GM12878 (cell line): ENCODE measurements at regions of chr12 and their contacts with region 1.

Region 1: DNA sequence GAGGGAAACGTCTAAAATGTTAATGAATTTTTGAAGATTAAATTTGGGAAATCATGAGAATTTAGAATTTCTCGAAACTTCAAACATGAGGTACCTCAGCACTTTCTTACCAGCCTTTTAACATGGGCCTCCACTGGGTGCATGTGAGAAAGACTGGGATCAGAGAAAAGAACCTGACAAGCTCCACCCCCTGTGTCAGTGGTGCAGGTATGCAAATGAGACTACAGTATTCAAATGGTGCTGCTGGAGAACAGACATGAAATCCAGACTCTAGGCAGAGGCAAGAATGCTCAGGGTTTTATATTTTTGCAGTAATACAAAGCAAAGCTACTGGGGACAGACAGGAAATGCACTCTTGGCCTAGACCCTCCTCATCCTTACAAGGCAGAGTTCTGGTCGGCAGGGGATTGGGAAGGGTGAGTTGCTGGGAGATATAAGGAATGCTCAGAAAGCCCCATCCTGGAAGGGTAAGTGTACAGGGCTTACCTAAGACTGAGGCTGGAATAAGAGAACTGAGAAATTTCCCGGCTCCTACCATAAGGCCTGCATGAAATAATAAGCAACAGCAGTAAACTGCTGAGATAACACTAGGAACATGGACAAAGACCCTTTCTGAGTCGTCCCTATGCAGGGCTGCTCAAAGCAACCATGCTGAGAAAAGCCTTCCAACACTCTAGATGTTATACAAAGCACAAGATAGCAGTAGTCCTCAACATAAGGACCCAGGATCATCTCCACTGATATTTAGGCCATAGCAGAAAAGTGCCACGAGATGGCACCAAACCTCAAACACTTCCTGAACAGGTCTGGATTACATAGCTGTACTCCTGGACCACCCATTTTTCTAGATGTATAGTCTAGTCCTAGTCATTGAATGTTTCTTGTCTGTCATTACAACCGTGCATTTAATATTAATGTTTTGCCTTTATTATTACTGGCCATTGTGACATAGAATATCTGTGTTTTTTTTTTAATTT is 260.8 kb downstream of the RASSF9 start:
- DNase-seq: peak; percentile 13
- ATAC-seq: peak; percentile 100
- H3K4me3 ChIP-seq: no peak overlapping the region
- H3K27ac ChIP-seq: no peak overlapping the region
- H3K4me1 ChIP-seq: no peaks in the 10 kb centered on the region
- H3K27me3 ChIP-seq: no peaks in the 10 kb centered on the region
- CTCF ChIP-seq: peak; percentile 68 to 74 (median 68)
- EP300 ChIP-seq: no peak
- POLR2A ChIP-seq: no peak
- RAD21 ChIP-seq: peak; percentile 76

Region 2: GRCh38 chr12:85301051-85301450 is 274.4 kb before region 1 on chr12:
- CTCF ChIA-PET with region 1: no interaction called
- POLR2A ChIA-PET with region 1: no interaction called
- RAD21 ChIA-PET with region 1: no interaction called
- SMC1A ChIA-PET with region 1: no interaction called
- in situ Hi-C with region 1: no loop called
- intact Hi-C with region 1: no loop called
- DNase-seq: no peak
- ATAC-seq: peak; percentile 49
- H3K4me3 ChIP-seq: no peak overlapping the region
- H3K27ac ChIP-seq: no peak overlapping the region
- H3K4me1 ChIP-seq: no peaks in the 10 kb centered on the region
- H3K27me3 ChIP-seq: no peaks in the 10 kb centered on the region
- CTCF ChIP-seq: no peak
- EP300 ChIP-seq: no peak
- POLR2A ChIP-seq: no peak
- RAD21 ChIP-seq: no peak

Region 3: DNA sequence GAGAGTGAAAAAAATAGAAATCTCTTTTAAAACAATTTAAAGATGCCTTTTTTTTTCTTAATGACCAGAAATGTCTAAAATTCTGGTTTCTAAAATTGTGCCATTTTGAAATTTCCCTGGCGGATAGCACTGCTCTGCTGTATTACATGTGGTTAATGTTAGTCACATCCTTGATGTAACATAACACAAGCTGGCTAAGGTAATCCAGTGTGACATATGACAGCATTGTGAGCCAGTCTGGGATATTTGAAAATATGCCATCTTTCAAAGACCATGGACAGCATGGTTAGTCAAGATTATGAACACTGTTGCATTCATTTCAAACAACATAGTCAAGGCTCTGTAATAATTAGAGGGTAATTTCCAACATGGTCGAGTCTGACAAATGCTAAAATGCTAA is 162.1 kb before region 1 on chr12:
- CTCF ChIA-PET with region 1: no interaction called
- POLR2A ChIA-PET with region 1: no interaction called
- RAD21 ChIA-PET with region 1: no interaction called
- SMC1A ChIA-PET with region 1: no interaction called
- in situ Hi-C with region 1: no loop called
- intact Hi-C with region 1: no loop called
- DNase-seq: no peak
- ATAC-seq: no peak
- H3K4me3 ChIP-seq: no peak overlapping the region
- H3K27ac ChIP-seq: no peak overlapping the region
- H3K4me1 ChIP-seq: no peaks in the 10 kb centered on the region
- H3K27me3 ChIP-seq: no peaks in the 10 kb centered on the region
- CTCF ChIP-seq: no peak
- EP300 ChIP-seq: no peak
- POLR2A ChIP-seq: no peak
- RAD21 ChIP-seq: no peak

Region 4: DNA sequence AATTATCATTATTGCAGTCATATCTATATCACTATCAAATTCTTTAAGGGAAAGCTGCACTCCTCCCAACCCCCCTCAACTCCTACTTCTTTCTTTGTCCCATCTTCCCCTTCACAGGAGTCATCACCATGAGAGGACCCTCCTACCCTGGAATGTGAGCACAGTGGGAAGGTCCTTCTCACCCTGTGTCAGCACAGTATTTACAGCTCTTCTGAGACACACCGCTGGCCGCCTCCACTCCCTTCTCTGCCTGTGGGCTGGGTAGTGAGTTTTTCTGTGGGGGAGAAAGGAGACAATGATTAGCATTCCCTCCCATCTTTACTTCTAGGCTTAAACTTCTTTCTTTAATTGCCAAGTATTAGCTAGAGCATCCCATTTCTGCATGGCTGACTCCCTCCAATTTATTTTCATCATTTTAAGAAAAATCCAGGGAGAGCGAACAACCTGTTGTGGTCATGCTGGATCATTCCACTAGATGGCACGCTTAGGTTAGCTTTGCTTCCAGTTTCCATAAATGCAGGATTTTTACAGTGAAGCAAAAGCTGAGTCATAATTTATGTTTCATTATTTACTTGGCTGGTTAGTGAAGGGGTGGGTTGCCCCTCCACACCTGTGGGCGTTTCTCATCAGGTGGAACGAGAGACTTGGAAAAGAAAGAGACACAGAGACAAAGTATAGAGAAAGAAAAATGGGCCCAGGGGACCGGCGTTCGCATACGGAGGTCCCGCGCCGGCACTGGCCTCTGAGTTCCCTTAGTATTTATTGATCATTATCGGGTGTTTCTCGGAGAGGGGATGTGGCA is 106.9 kb before region 1 on chr12:
- CTCF ChIA-PET with region 1: interaction called, 6 read pairs
- POLR2A ChIA-PET with region 1: no interaction called
- RAD21 ChIA-PET with region 1: interaction called, 5 read pairs
- SMC1A ChIA-PET with region 1: interaction called, 4 read pairs
- in situ Hi-C with region 1: no loop called
- intact Hi-C with region 1: loop called (anchors 2 kb)
- DNase-seq: peak; percentile 23
- ATAC-seq: peak; percentile 95
- H3K4me3 ChIP-seq: peak overlapping the region; percentile 31; the same call in 1 of the 2 replicates
- H3K27ac ChIP-seq: no peak overlapping the region
- H3K4me1 ChIP-seq: 0 out of 2 replicates have a peak, but pooled peaks cover 2% of the 10 kb centered on the region
- H3K27me3 ChIP-seq: no peaks in the 10 kb centered on the region
- CTCF ChIP-seq: peak; percentile 69 to 86 (median 79)
- EP300 ChIP-seq: no peak
- POLR2A ChIP-seq: no peak
- RAD21 ChIP-seq: peak; percentile 98